Common myeloid progenitor, CD34-positive (primary cell): ENCODE measurements at regions of chr6 and their contacts with region 1.

Region 1: GRCh38 chr6:53725791-53726431 is 60.4 kb upstream of the KLHL31 start:
- DNase-seq: peak; percentile 71 to 85 (median 81)
- H3K4me3 ChIP-seq: no peak overlapping the region
- H3K27ac ChIP-seq: no peak overlapping the region
- H3K4me1 ChIP-seq: peaks cover 0 to 4% (median 2%) of the 10 kb centered on the region in 4 experiments
- H3K27me3 ChIP-seq: no peaks in the 10 kb centered on the region

Region 2: GRCh38 chr6:53707108-53707897 is 18.6 kb before region 1 on chr6:
- CTCF ChIA-PET with region 1: interaction called, 39 read pairs
- POLR2A ChIA-PET with region 1: interaction called, 4 read pairs
- DNase-seq: no peak
- H3K4me3 ChIP-seq: no peak overlapping the region
- H3K27ac ChIP-seq: no peak overlapping the region
- H3K4me1 ChIP-seq: peaks cover 0 to 9% (median under 1%) of the 10 kb centered on the region in 4 experiments
- H3K27me3 ChIP-seq: no peaks in the 10 kb centered on the region

Region 3: GRCh38 chr6:53744334-53744733 is 18.4 kb after region 1 on chr6:
- CTCF ChIA-PET with region 1: interaction called, 11 read pairs
- POLR2A ChIA-PET with region 1: no interaction called
- DNase-seq: no peak
- H3K4me3 ChIP-seq: no peak overlapping the region
- H3K27ac ChIP-seq: no peak overlapping the region
- H3K4me1 ChIP-seq: no peaks in the 10 kb centered on the region
- H3K27me3 ChIP-seq: no peaks in the 10 kb centered on the region

Region 4: GRCh38 chr6:53752856-53753255 is 26.9 kb after region 1 on chr6:
- CTCF ChIA-PET with region 1: interaction called, 10 read pairs
- POLR2A ChIA-PET with region 1: no interaction called
- DNase-seq: no peak
- H3K4me3 ChIP-seq: no peak overlapping the region
- H3K27ac ChIP-seq: no peak overlapping the region
- H3K4me1 ChIP-seq: peaks cover 0 to 3% (median 0%) of the 10 kb centered on the region in 4 experiments
- H3K27me3 ChIP-seq: no peaks in the 10 kb centered on the region

Region 5: DNA sequence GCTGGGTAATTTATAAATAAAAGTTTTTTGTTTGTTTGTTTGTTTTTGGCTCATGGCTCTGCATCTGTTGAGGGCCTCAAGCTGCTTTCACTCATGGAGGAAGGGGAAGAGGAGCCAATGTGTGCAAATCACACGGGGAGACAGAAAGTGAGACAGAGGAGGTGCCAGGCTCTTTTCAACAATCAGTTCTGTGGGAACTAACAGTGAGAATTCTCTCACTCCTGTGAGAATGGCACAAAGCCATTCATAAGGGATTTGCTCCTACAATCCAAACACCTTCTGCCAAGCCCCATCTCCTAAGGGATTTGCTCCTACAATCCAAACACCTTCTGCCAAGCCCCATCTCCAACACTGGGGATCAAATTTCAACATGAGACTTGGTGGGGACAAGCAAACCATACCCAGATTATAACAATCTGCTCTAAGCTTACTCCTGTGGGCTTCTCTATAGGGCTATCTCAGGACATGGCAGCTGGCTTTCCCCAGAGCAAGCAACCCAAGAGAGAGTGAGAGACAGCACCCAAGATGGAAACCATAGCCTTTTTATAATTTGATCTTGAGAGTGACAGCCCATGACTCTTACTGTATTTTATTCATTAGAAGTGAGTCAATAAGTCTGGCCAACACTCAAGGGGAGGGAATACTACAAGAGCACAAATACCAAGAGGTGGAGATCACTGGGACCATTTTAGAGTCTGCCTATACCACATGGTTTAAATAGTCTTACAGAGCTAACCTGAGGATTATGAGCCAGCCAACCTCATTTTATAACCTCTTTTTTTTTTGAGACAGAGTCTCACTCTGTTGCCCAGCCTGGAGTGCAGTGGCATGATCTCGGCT is 46.1 kb after region 1 on chr6:
- CTCF ChIA-PET with region 1: no interaction called
- POLR2A ChIA-PET with region 1: no interaction called
- DNase-seq: no peak
- H3K4me3 ChIP-seq: no peak overlapping the region
- H3K27ac ChIP-seq: no peak overlapping the region
- H3K4me1 ChIP-seq: no peaks in the 10 kb centered on the region
- H3K27me3 ChIP-seq: no peaks in the 10 kb centered on the region